Activated CD4-positive, alpha-beta T cell treated with anti-CD3 and anti-CD28 coated beads for 36 hours (primary cell): ENCODE measurements at regions of chr6 and their contacts with region 1.

Region 1: GRCh38 chr6:56699066-56699654 is 56.5 kb upstream of the DST start:
- DNase-seq: no peak
- ATAC-seq: no peak
- H3K4me3 Mint-ChIP-seq: no peak overlapping the region
- H3K27ac Mint-ChIP-seq: no peak overlapping the region
- H3K4me1 Mint-ChIP-seq: no peaks in the 10 kb centered on the region
- H3K27me3 Mint-ChIP-seq: peaks cover 1% of the 10 kb centered on the region

Region 2: DNA sequence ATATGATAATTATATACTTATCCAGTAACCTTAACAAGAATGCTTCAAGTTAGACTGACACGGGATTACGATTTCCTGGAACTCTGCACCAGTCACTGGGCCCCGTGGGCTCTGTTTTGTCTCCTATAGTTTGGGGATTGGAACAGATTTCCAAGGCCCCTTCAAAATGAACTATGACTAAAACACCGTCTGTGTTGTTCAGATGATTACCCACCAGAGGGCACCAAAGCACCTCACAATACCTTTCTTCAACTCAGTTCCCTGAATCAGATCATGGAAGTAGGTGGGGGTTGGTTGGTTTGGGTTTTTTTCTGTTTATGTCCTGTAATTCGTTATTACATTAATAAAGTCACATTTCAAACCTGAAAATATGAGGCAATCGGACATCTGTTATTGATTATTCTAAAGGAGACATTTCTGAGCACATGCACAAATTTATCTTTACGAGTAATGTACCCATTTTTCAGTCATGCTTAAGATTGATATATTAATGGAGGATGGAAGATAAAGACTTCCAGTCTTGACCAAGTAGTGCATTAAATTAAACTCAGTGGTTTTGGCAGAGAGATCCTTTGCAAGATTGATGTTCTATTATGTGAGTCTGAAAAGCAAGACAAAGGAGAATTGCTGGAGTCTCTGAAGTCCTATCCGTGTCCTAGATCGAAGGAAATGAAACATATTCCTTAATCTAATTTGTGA is 339.8 kb before region 1 on chr6:
- CTCF ChIA-PET with region 1: interaction called, 3 read pairs
- POLR2A ChIA-PET with region 1: no interaction called
- intact Hi-C with region 1: loop called (anchors 1 kb)
- DNase-seq: peak; percentile 75
- ATAC-seq: no peak
- H3K4me3 Mint-ChIP-seq: no peak overlapping the region
- H3K27ac Mint-ChIP-seq: no peak overlapping the region
- H3K4me1 Mint-ChIP-seq: no peaks in the 10 kb centered on the region
- H3K27me3 Mint-ChIP-seq: peaks cover 1% of the 10 kb centered on the region

Region 3: DNA sequence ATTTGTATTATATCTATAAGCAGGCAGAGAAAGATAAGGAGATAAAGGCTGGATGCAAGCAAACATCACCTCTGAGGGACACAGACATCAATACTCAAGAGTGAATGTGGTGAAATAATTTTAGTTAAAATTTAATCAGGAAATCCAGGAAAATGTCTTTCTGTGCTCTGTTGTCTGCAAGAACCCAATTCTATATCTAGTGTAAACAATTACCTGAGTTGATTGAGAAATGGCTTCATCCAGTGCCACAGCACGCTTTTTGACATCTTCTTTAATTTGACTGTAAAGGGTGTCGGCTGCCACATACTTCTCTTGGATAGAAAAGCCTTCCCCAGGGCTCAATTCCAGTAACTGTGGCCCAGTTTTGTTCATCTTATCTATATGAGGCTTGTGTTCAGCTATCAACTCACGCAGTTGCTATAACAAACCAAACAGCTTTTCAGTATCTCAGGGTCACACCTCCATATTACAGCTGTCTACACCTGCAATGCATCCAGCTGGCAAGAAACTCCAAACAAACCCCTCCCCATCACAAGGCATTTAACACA is 188.1 kb before region 1 on chr6:
- CTCF ChIA-PET with region 1: no interaction called
- POLR2A ChIA-PET with region 1: no interaction called
- intact Hi-C with region 1: no loop called
- DNase-seq: no peak
- ATAC-seq: no peak
- H3K4me3 Mint-ChIP-seq: no peak overlapping the region
- H3K27ac Mint-ChIP-seq: no peak overlapping the region
- H3K4me1 Mint-ChIP-seq: no peaks in the 10 kb centered on the region
- H3K27me3 Mint-ChIP-seq: no peaks in the 10 kb centered on the region

Region 4: DNA sequence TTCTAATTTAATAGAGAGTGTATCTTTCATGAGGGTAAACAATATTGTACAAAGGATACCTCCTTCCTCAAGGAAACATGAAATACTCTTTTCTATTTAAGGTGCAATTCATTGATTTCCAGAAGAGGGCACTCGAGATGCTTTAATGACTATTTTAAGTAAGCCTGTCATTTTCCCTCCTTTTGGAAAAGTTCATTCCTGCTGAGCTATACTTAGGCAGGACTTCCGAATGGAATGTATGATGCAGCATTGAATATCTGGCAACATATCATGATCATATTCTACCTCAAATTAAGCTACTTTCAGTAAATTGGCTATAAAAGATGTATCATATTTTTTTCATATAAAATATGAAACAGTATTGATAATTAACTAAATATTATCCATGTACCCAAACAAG is 61.5 kb before region 1 on chr6:
- CTCF ChIA-PET with region 1: interaction called, 6 read pairs
- POLR2A ChIA-PET with region 1: no interaction called
- intact Hi-C with region 1: loop called (anchors 1 to 5 kb)
- DNase-seq: no peak
- ATAC-seq: no peak
- H3K4me3 Mint-ChIP-seq: no peak overlapping the region
- H3K27ac Mint-ChIP-seq: no peak overlapping the region
- H3K4me1 Mint-ChIP-seq: no peaks in the 10 kb centered on the region
- H3K27me3 Mint-ChIP-seq: no peaks in the 10 kb centered on the region

Region 5: DNA sequence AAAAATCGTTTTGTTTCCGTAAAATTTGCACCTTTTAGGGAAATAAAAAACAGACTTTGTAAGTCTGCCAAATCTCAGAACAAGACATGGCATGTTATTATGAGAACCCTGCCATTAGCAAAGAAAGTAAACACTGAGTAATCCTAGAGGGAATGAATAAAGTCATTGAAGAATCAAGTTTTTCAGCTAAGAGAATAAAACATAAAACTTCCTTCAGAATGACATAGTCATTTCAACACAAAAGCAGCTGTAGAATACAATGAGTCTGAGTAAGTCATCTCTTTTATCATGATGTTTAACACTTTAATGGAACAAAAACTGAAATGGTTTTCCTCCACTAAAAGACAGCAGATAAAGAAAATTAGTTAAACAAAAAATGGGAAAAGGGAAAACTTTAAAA is 46.2 kb before region 1 on chr6:
- CTCF ChIA-PET with region 1: no interaction called
- POLR2A ChIA-PET with region 1: no interaction called
- intact Hi-C with region 1: no loop called
- DNase-seq: no peak
- ATAC-seq: no peak
- H3K4me3 Mint-ChIP-seq: no peak overlapping the region
- H3K27ac Mint-ChIP-seq: no peak overlapping the region
- H3K4me1 Mint-ChIP-seq: no peaks in the 10 kb centered on the region
- H3K27me3 Mint-ChIP-seq: no peaks in the 10 kb centered on the region